HEK293 (cell line): ENCODE measurements at regions of chr1 and their contacts with region 1.

Region 1: DNA sequence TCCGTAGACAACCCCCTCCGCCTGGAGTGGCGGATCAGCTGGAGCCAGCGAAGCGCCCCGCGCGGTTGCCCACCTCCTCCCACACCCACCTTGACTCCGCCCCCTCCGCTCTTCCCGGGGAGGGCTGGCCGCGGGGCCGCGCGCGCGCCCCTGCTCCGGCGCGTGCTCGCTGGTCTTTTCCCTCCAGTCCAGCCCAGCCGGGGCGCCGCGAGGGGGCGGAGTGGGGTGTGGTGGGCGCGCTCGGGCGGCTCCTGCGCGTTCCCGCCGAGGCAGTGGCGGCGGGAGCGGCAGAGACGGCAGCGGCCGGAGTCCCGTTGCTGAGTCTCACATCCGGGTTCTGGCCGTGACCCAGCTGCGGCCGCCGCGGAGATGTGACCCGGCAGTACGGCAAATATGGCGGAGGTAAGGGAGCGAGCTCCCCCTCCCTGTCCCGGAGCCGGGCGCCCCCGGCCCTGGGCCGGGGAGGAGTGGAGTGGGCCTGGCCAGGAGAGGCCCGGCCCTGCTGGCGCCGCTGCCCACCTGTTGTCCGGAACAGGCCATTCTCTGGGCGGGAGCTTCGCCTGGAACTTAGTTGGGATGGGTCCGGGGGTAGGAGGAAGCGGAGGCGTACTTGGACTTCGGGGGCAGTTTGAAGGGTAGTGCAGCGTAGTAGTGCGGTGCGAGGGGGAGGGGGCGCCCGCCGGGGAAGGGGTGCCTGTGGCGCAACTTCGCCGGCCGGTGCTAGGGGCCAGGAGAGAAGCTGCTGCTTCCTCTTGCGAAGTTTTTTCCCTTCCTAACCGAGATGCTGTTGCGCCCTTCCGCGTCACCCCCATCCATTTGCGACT is 5.4 kb downstream of the MIER1 start:
- H3K4me3 ChIP-seq: peak overlapping the region; percentile 93
- H3K27ac ChIP-seq: peak overlapping the region; percentile 71
- H3K4me1 ChIP-seq: peaks cover 8% of the 10 kb centered on the region
- CTCF ChIP-seq: peak; percentile 71

Region 2: DNA sequence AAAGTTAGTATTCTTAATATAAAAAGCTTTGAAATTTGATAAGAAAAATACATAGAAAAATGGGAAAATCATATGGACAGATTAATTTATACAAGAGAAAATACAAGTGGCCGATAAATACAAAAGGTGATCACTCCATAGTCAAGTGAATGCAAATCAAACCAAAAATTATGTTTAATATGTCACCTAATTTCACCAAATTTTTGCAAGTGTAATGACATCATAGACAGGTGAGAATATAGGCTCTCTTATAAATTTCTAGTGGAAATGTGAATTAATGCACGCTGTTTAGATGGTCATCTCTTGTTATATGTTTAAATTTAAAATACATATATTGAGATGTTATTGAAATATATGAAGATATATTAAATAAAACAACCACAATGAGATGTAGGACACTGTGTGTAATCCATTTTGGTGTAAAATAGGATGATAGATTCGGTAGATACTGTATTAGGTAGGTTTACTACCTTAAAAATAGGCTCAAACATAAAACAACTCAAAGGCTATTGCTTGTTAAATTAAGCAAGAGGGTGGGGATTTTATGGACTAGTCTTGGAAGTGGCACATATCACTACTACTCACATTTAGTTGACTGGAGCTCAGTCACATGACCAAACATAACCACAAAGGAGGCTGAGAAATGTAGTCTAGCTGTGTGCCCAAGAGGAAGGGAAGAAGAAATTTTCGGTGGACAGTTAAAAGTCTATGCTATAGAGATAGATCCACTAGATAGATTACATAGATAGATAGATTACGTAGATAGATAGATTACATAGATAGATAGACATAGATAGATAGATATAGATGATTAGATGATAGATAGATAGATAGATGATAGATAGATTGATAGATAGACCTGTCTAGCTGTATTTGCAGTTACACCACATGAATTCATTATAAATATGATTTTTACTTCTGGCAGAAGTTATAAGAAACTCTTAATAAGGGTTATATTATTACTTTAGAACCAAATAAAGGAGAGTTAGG is 138.3 kb before region 1 on chr1:
- CTCF ChIA-PET with region 1: no interaction called
- POLR2A ChIA-PET with region 1: no interaction called
- H3K4me3 ChIP-seq: no peak overlapping the region
- H3K27ac ChIP-seq: no peak overlapping the region
- H3K4me1 ChIP-seq: no peaks in the 10 kb centered on the region
- CTCF ChIP-seq: no peak

Region 3: DNA sequence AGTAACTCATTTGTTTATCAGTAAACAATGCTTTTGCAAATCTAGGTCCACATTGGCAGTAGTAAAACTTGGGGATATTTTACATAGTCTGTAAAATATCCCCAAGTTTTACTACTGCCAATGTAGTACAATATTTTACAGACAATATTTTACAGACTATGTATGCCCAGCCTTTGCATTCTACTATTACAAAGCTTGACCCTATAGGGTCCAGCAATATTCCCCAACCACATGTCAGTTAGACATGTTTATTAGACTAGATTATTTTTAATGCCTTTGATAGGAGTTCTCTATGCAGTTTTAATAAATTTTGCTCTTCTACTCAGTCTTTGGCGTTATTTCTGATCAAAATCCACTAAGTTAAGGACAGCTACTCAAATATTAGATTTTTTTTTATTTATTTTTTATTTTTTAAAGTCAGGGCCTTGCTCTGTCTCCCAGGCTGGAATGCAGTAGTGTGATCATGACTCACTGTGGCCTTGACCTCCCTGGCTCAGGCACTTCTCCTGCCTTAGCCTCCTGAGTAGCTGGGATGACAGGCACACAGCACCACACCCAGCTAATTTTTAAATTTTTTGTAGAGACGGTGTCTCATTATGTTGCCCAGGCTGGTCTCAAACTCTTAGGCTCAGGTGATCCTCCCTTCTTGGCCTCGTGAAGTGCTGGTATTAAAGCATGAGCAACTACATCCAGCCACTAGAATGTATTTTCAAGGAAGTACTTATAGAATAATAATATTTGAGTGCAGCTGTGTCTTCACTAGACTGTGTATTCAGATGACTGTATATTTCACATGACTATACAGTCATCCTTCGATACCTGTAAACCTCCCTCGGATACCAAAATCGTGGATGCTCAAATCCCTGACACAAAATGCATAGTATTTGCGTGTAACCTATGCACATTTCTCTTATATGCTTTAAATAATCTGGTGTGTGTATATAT is 14.4 kb after region 1 on chr1:
- CTCF ChIA-PET with region 1: interaction called, 5 read pairs
- POLR2A ChIA-PET with region 1: interaction called, 11 read pairs
- H3K4me3 ChIP-seq: no peak overlapping the region
- H3K27ac ChIP-seq: no peak overlapping the region
- H3K4me1 ChIP-seq: no peaks in the 10 kb centered on the region
- CTCF ChIP-seq: no peak

Region 4: DNA sequence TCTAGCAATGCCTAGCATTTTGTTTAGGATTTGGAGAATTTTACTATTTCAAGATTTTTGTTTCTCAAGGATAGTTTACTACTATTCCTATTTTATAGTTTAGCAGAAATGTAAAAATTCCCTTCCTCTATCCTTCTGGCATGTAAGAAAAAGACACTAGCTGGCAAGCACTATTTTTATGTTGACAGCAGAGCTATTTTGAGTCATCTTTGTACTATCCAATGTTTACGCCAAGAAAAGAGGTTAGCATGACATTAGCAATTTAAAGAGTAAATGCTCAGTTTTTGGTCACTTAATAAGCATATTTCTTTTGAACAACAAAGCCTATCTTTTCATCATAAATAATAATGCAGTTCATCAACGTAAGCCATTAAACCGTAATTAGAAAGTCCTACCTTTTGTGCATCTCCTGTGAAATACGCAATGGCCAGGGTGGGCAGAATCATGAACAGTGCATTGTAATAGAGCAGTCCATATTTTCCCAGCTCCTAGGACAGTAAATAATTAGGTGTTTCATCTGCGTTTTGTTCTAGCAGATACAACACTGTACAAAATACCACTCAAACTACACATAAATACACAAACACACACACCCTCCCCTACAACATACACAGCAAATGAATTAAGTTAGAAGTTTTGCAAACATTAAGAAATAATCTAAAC is 111.8 kb after region 1 on chr1:
- CTCF ChIA-PET with region 1: no interaction called
- POLR2A ChIA-PET with region 1: no interaction called
- H3K4me3 ChIP-seq: no peak overlapping the region
- H3K27ac ChIP-seq: no peak overlapping the region
- H3K4me1 ChIP-seq: no peaks in the 10 kb centered on the region
- CTCF ChIP-seq: no peak